ENCODE measurements at regions of chr2 and their contacts with region 1.

Region 1: DNA sequence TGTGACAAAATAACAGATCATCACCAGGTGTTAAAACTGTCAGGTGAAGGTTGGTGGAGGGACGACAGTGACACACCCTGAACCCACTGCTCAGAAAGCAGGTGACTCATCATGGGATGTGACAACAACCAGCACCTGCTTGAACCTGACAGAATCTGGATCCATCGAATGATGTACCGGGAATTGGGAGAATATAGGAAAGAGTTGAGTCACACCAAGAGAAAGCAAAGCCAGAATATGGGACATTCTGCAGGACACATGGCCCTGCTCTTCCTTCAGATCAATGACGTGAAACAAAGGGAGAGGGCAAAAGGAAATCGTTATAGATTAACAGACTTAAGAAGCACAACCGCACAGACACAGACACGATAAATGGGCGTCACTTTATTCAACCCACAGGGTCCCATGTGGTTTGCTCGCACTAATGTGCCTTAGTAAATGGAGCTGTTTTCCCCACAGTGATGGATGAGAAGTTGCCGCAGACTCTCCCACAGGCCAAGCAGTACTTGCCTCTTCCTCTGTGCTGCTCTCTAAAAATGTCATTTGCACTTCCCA is 100.1 kb downstream of the CRACDL start:
- DNase-seq: peak; percentile 69
- H3K4me3 Mint-ChIP-seq: peak overlapping the region; percentile 5
- H3K27ac Mint-ChIP-seq: peak overlapping the region; percentile 62
- H3K4me1 Mint-ChIP-seq: peaks cover 26% of the 10 kb centered on the region
- H3K27me3 Mint-ChIP-seq: no peaks in the 10 kb centered on the region

Region 2: GRCh38 chr2:97806738-97807618 is 1028.9 kb before region 1 on chr2:
- CTCF ChIA-PET with region 1: no interaction called
- intact Hi-C with region 1: loop called (anchors 5 kb)
- DNase-seq: peak; percentile 90
- H3K4me3 Mint-ChIP-seq: no peak overlapping the region
- H3K27ac Mint-ChIP-seq: no peak overlapping the region
- H3K4me1 Mint-ChIP-seq: no peaks in the 10 kb centered on the region
- H3K27me3 Mint-ChIP-seq: no peaks in the 10 kb centered on the region

Region 3: DNA sequence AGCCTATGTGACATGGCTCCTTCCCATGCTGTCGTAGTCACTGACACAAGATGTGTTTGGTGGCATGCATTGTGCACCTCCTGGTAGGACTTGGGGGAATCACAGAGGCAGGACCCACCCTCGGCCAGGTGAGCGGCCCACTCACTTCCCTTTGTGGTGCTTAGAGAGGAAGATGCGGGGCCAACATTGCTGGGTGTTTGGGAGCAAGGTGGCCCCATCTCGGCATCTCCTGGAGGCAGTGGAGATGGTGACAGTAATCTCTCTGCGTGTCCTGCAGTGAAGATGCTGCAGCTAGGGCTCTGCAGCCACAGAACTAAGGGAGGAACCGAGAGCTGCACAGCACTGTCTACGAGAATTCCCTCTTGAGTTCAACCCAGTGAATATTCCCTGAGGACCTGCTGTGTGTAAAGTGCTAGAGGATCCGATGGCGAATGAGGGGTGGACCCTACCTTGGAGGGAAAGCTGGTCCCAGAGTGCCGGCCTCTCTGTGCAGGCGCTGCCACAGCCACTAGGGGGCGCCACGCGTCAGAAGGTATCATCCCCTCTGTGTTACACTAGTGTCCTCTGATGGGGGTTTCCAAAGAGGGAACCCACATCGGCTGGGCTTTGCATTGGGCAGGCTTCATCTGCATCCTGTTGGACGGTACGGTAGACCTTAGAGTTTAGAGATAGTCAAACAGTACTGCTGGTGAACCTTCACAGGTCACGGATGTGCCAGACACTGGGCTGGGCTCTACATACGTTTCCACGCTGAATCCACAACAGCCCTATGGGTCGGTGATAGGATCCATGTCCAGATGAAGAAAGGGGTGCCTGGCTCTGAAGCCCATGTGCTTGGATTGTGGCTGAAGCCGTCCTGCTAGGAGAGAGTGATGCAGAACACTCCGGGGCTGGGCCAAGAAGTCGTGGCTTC is 266.8 kb before region 1 on chr2:
- CTCF ChIA-PET with region 1: interaction called, 7 read pairs
- intact Hi-C with region 1: loop called (anchors 1 kb)
- DNase-seq: peak; percentile 84
- H3K4me3 Mint-ChIP-seq: no peak overlapping the region
- H3K27ac Mint-ChIP-seq: no peak overlapping the region
- H3K4me1 Mint-ChIP-seq: no peaks in the 10 kb centered on the region
- H3K27me3 Mint-ChIP-seq: no peaks in the 10 kb centered on the region

Region 4: DNA sequence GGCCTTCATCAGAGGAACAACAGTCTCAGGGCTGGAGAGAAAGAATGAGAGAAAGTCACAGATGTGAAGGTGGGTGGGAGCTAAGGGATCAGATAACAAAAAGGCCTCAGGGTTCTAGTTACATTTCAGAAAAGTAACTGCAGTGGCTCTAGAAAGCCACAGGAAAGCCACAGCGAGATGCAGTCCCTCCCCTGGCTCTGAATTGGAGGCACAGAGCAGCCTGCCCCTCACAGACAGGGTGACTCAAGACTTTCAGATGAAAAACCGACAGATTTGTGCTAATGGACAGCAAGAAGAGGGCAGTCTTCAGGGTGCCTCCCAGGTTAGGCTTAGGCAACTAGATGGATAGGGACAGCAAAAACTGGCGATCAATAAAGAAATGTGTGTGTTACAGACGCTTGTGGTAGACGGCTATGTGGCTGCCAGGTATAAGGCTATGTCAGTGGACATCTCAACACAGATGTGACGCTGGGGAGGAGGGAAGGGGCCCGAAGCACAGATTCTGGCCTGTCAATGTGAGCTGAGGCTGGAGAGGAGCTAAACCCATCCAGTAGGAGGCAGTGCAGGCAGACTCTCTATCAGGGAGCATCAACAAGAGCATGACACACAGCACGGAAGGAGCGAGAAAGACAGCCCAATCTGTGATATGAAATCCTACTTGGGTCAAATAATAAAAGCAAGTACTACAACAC is 201.4 kb before region 1 on chr2:
- CTCF ChIA-PET with region 1: interaction called, 3 read pairs
- intact Hi-C with region 1: loop called (anchors 2 kb)
- DNase-seq: peak; percentile 76
- H3K4me3 Mint-ChIP-seq: no peak overlapping the region
- H3K27ac Mint-ChIP-seq: peak overlapping the region; percentile 85
- H3K4me1 Mint-ChIP-seq: peaks cover 32% of the 10 kb centered on the region
- H3K27me3 Mint-ChIP-seq: no peaks in the 10 kb centered on the region

Region 5: DNA sequence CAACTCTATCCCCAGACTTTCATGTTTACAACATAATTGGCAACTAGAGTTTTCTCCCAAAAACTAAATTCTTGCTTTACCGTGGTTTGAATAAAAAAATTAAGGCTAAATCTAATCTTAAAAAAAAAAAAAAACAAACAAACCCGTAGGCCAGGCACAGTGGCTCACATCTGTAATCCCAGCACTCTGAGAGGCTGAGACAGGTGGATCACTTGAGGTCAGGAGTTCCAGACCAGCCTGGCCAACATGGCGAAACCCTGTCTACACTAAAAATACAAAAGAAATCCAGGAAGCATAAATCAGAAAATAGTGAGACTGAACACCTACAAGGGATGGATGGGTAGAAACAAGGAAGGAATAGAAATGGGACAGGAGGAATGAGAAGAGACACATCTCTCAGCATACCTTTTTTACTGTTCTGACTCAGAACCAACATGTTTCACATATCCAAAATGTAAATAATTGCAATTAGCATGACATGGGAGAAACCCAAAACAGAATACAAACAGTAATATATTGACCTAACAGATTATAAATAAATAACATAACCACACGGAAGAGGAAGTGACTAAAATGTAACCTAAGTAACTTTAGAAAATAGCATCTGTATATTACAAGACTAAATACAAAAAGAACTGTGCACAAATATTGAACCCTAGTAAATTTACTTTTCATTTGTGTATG is 122.4 kb before region 1 on chr2:
- CTCF ChIA-PET with region 1: no interaction called
- intact Hi-C with region 1: loop called (anchors 5 kb)
- DNase-seq: no peak
- H3K4me3 Mint-ChIP-seq: no peak overlapping the region
- H3K27ac Mint-ChIP-seq: peak overlapping the region; percentile 12
- H3K4me1 Mint-ChIP-seq: peaks cover 94% of the 10 kb centered on the region
- H3K27me3 Mint-ChIP-seq: no peaks in the 10 kb centered on the region

Region 6: DNA sequence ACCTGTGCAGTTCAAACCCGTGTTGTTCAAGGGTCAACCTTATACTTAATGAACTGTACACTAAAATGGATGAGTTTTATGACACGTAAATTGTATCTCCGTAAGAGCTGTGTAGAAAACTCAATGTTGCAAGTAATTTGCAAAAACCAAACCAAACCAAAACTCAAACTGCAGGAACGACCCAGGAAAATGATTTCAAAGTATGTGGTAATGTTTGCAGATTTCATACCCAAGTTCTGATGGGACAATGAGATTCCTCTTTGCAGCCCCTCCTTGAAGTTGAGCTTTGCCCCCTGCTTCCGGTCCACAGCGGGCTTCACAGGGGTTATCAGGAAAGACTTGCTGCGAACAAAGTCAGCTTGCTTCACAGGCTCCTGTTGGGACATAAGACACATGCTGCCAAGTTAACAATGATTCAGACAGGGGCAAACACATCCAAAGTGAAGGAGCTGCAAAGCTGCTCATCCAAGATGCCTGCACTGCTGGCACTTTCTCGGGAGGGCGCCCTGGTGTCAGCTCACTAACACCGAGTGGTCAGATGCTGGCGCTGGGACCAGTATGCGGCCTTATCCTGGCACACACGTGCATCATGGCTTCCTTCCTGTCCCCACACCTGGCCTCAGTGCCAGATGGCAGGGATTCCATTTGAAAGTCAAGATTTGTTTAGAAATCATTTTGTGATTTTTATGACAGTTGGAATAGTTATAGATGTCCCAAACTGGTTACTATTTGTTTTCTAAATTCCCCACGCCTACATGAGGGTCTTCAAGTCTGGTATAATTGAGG is 39.8 kb before region 1 on chr2:
- CTCF ChIA-PET with region 1: no interaction called
- intact Hi-C with region 1: no loop called
- DNase-seq: no peak
- H3K4me3 Mint-ChIP-seq: no peak overlapping the region
- H3K27ac Mint-ChIP-seq: no peak overlapping the region
- H3K4me1 Mint-ChIP-seq: no peaks in the 10 kb centered on the region
- H3K27me3 Mint-ChIP-seq: no peaks in the 10 kb centered on the region

Region 7: GRCh38 chr2:99066075-99066958 is 230.4 kb after region 1 on chr2:
- CTCF ChIA-PET with region 1: interaction called, 4 read pairs
- intact Hi-C with region 1: loop called (anchors 1 kb)
- DNase-seq: peak; percentile 65
- H3K4me3 Mint-ChIP-seq: no peak overlapping the region
- H3K27ac Mint-ChIP-seq: no peak overlapping the region
- H3K4me1 Mint-ChIP-seq: peaks cover 4% of the 10 kb centered on the region
- H3K27me3 Mint-ChIP-seq: no peaks in the 10 kb centered on the region